Heart left ventricle (tissue), 16 donors: ENCODE measurements at regions of chr2 and their contacts with region 1.

Region 1: GRCh38 chr2:11239666-11240462 is 84.6 kb downstream of the SLC66A3 start:
- DNase-seq: no peak
- ATAC-seq: peak in 3 of 4 donors; percentile 49 to 79 (median 64)
- H3K4me3 ChIP-seq: no peak overlapping the region
- H3K27ac ChIP-seq: peak overlapping the region in 2 of 12 donors; percentile 5 to 28
- H3K4me1 ChIP-seq: peaks cover 0 to 16% (median 9%) of the 10 kb centered on the region in 12 donors
- H3K27me3 ChIP-seq: no peaks in the 10 kb centered on the region
- CTCF ChIP-seq: no peak
- POLR2A ChIP-seq: no peak

Region 2: DNA sequence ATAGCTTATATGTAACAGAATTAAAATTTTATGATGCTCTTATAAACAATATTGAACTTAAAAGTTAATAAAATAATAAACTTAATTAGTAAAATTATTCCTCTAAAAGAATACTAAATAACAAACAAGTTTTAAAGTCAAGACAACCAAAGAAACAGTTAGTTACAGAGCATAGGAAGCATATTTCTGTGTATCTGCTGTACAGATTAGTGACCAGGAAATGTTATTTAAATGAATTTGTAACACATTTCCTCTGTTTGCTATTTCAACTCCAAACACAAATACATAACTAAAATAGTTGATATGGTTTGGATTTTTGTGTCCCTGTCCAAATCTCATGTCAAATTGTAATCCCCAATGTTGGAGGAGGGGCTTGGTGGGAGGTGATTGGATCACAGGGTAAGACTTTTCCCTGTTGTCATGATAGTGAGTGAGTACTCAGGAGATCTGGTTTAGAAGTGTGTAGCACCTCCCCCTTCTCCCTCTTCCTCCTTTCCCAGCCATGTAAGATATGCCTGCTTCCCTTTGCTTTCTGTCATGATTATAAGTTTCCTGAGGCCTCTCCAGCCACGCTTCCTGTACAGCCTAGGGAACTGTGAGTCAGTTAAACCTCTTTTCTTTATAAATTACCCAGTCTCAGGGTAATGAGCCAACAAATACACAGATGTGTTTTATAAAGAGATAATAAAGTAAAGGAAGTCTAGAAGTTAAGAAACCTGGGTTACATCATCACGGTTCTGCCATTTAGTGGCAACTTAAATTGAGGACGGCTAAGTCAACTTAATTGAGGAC is 52.8 kb after region 1 on chr2:
- intact Hi-C with region 1: loop called in 1 of 10 experiments (anchors 10 kb)
- DNase-seq: peak in 1 of 5 donors; percentile 15
- ATAC-seq: peak; percentile 20 to 89 (median 66)
- H3K4me3 ChIP-seq: no peak overlapping the region
- H3K27ac ChIP-seq: peak overlapping the region in 11 of 12 donors; percentile 5 to 50 (median 37)
- H3K4me1 ChIP-seq: peaks cover 0 to 65% (median 32%) of the 10 kb centered on the region in 12 donors
- H3K27me3 ChIP-seq: no peaks in the 10 kb centered on the region
- CTCF ChIP-seq: no peak
- POLR2A ChIP-seq: no peak

Region 3: GRCh38 chr2:11393711-11394236 is 153.9 kb after region 1 on chr2:
- intact Hi-C with region 1: no loop called
- DNase-seq: no peak
- ATAC-seq: peak in 3 of 4 donors; percentile 19 to 24 (median 23)
- H3K4me3 ChIP-seq: peak overlapping the region in 5 of 12 donors; percentile 17 to 35 (median 20)
- H3K27ac ChIP-seq: peak overlapping the region in 10 of 12 donors; percentile 6 to 82 (median 68)
- H3K4me1 ChIP-seq: peaks cover 0 to 63% (median 33%) of the 10 kb centered on the region in 12 donors
- H3K27me3 ChIP-seq: no peaks in the 10 kb centered on the region
- CTCF ChIP-seq: no peak
- POLR2A ChIP-seq: no peak

Region 4: DNA sequence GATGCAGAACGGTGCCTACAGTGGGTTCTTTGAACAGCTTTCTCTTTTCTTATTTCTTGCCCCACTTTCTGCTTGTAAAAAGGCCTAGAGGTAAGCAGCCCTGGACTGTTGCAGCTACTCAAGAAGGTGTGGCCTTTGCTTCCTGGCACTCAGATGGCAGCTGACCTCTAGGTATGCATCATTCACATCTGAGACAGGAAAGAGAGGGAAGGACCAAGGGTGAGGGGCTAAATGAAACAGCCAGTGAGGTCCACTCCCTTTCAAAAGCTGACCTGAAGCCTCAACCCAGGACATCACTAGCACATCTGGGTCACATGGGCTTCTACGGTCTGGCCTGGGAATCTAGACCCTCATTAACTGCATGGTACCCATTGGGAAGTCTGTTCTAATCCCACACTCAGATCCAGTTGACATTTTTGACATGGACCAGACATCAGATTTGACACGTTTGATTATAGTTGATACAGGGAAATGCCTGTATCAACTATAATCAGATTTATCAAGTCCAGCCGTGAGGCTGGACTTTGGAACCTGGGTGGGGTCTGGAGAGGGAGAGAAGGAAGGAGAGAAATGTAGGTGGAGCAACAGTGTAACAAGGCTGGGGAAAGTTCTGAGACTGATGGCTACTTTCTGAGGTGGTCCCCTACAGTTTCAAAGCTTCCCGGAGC is 165.9 kb after region 1 on chr2:
- intact Hi-C with region 1: loop called in 2 of 10 experiments (anchors 2 kb)
- DNase-seq: no peak
- ATAC-seq: no peak
- H3K4me3 ChIP-seq: no peak overlapping the region
- H3K27ac ChIP-seq: peak overlapping the region in 11 of 12 donors; percentile 55 to 92 (median 79)
- H3K4me1 ChIP-seq: peaks cover 0 to 44% (median 22%) of the 10 kb centered on the region in 12 donors
- H3K27me3 ChIP-seq: no peaks in the 10 kb centered on the region
- CTCF ChIP-seq: no peak
- POLR2A ChIP-seq: no peak